ENCODE measurements at regions of chr17 and their contacts with region 1.

Region 1: DNA sequence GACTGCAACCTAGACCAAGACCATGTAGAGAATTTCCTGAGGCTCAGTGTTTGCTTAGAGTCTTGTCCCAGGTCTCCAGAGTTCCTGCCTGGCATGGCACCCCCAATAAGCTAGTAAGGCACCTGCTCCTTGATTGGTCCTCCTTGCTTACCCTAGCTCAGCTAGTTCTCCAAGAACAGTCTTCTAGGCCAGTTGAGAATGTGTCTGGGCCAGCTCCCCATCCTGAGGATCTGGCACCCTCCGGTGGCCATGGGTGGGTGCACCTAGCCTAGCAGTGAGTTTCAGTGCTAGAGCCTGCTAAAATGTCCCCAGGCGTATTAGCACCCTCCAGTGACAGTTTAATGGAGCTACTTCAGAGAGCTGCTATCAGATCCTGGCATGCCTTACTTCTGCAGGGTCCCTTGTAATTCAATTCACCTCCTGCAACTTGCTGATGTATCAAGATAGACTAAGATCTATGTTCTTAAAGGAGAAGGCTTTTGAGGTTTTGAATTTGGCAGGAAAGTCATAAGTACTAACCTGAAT is 44.4 kb upstream of the MED13 start:
- DNase-seq: peak; percentile 81
- H3K4me3 Mint-ChIP-seq: no peak overlapping the region
- H3K27ac Mint-ChIP-seq: no peak overlapping the region
- H3K4me1 Mint-ChIP-seq: no peaks in the 10 kb centered on the region
- H3K27me3 Mint-ChIP-seq: no peaks in the 10 kb centered on the region
- CTCF ChIP-seq: peak; percentile 67

Region 2: DNA sequence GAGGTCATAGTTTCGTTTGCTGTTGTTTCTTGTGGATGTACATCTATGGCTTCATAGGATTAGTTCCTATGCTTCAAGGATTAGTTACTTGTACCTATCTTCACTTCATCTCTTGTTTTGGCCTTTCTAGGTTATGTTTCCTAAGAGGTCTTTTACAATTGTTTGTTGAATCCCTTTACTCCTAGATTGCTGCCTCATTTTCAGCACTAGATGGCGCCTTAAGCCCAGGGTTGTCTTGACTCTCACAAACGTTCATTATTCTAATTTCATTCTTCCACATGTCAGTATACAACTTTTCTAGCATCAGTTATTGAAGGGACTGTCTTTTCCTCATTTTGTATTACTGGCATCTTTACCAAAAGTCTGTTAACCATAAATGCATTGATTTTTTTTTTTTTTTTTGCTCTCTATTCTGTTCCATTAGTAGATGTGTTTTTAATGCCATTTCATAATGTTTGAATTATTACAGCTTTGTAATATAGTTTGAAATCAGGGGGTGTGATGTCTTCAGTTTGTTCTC is 473.5 kb before region 1 on chr17:
- CTCF ChIA-PET with region 1: no interaction called
- intact Hi-C with region 1: loop called (anchors 1 kb)
- DNase-seq: peak; percentile 44
- H3K4me3 Mint-ChIP-seq: no peak overlapping the region
- H3K27ac Mint-ChIP-seq: no peak overlapping the region
- H3K4me1 Mint-ChIP-seq: no peaks in the 10 kb centered on the region
- H3K27me3 Mint-ChIP-seq: no peaks in the 10 kb centered on the region
- CTCF ChIP-seq: no peak

Region 3: DNA sequence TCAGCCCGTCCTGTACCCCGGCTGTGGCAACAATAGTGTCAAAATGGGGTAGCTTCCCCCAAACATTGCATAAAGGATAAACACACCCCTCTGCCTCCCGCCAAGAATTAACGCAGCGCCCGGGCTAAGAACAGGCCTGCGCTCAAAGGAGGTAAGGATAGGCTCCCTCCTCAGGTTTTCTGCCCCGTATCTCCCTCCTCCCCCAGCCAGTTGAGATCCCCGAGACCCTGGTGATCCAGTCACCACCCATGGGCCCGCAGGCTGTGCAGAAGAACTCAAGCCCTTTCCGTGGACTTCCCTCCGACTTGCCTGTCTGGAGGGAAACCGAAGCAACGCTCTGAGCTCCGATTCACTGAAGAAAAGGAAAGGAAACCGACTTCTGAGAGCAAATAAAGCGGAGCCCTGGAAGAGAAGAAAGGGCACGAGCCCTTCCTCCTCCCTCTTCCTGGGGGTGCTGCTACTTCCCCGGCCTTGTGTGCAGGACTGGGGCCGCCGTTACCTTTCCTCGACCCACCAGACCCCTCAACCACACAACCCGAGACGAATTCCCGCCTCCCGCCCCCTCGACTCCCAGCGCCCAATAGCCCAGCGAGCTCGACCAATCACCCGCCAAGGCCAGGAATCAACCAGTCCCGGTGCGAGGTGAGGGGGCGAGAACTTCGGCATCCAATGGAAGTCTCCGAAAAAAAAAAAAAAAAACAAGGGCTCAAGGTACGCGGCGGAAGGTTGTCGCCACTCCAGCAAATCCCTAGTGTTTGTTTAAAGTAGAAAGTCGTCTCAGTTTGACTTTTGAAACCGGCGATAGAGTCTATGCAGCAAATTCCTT is 246.3 kb before region 1 on chr17 and contains the start of gene BRIP1:
- CTCF ChIA-PET with region 1: interaction called, 25 read pairs
- intact Hi-C with region 1: no loop called
- DNase-seq: peak; percentile 88
- H3K4me3 Mint-ChIP-seq: peak within 1 kb of the TSS; percentile 83
- H3K27ac Mint-ChIP-seq: peak within 1 kb of the TSS; percentile 88
- H3K4me1 Mint-ChIP-seq: peaks cover 9% of the 10 kb centered on the region
- H3K27me3 Mint-ChIP-seq: no peaks in the 10 kb centered on the region
- CTCF ChIP-seq: no peak
- total RNA-seq, gene BRIP1: 10.3 and 12.3 TPM in 2 replicates

Region 4: DNA sequence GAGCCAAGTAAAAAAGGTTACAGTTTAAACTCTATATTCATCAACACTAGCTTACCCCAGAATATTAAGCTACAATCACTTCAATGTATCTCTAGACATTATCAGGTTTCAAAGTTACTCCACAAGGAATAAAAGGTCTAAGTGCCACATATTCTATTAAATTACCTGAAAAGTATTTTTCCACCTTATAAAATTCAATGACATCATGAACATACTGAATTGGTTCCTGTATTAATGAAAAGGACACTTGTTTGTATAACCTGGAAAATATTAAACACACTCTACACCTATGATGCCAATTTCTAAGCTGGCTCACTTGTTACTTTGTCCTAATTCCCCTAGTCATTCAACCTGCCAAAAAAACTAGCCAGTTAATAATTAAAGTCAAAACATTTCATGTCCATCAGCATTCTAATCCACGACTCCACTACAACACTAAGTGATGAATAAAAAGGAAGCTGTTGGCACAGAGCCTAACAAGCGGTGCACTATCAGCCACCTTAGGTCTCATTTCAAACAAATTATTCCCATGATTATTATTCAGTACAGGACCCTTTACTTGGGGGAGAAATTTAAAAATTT is 56.6 kb before region 1 on chr17:
- CTCF ChIA-PET with region 1: interaction called, 17 read pairs
- intact Hi-C with region 1: no loop called
- DNase-seq: peak; percentile 31
- H3K4me3 Mint-ChIP-seq: no peak overlapping the region
- H3K27ac Mint-ChIP-seq: peak overlapping the region; percentile 71
- H3K4me1 Mint-ChIP-seq: peaks cover 49% of the 10 kb centered on the region
- H3K27me3 Mint-ChIP-seq: no peaks in the 10 kb centered on the region
- CTCF ChIP-seq: no peak

Region 5: GRCh38 chr17:62065598-62066468 is 43.6 kb before region 1 on chr17:
- CTCF ChIA-PET with region 1: interaction called, 23 read pairs
- intact Hi-C with region 1: no loop called
- DNase-seq: peak; percentile 95
- H3K4me3 Mint-ChIP-seq: peak overlapping the region; percentile 95
- H3K27ac Mint-ChIP-seq: peak overlapping the region; percentile 90
- H3K4me1 Mint-ChIP-seq: peaks cover 33% of the 10 kb centered on the region
- H3K27me3 Mint-ChIP-seq: no peaks in the 10 kb centered on the region
- CTCF ChIP-seq: peak; percentile 37

Region 6: DNA sequence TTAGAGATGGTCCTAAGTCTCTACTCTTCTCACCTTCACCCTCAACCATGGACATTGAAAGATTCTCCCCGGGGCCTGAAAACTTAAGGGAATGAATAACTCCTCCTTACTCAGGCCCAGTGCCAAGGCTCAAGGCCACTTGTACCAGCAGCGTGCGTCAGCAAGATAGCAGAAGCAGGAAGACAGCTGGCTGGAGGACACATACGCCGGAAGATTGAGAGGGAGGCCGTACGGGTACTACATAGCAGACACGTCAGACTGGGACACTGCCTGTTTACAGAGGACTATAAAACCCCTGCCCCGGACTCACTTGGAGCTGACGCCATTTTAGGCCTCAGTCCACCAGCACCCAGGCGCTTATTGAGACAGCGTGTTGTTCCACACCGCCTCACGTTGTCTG is 31.4 kb after region 1 on chr17:
- CTCF ChIA-PET with region 1: no interaction called
- intact Hi-C with region 1: no loop called
- DNase-seq: no peak
- H3K4me3 Mint-ChIP-seq: peak overlapping the region; percentile 19
- H3K27ac Mint-ChIP-seq: no peak overlapping the region
- H3K4me1 Mint-ChIP-seq: peaks cover 10% of the 10 kb centered on the region
- H3K27me3 Mint-ChIP-seq: peaks cover 14% of the 10 kb centered on the region
- CTCF ChIP-seq: no peak

Region 7: DNA sequence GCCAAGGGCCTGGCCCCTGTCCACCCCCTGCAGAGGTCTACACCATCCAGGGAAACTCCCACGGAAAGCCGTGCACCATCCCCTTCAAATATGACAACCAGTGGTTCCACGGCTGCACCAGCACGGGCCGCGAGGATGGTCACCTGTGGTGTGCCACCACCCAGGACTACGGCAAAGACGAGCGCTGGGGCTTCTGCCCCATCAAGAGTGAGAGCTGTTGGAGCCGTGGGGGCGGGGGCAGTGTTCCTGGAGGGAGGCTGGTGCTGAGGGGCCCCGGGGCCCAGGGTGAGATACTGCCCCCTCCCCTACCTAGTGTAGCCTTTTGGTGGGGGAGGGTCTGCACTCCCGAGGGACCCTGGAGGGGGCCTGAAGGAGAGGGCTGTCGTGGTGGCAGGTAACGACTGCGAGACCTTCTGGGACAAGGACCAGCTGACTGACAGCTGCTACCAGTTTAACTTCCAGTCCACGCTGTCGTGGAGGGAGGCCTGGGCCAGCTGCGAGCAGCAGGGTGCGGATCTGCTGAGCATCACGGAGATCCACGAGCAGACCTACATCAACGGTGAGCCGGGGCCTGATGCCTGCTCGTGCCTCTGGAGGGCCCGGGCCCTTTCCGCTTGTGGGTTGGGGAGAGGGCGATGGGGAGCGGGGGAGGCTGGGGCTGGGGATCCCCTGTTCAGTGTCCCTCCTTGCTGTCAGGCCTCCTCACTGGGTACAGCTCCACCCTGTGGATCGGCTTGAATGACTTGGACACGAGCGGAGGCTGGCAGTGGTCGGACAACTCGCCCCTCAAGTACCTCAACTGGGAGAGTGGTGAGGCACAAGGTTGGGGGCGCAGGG is 556.8 kb after region 1 on chr17:
- CTCF ChIA-PET with region 1: no interaction called
- intact Hi-C with region 1: no loop called
- DNase-seq: no peak
- H3K4me3 Mint-ChIP-seq: no peak overlapping the region
- H3K27ac Mint-ChIP-seq: no peak overlapping the region
- H3K4me1 Mint-ChIP-seq: peaks cover 4% of the 10 kb centered on the region
- H3K27me3 Mint-ChIP-seq: peaks cover 27% of the 10 kb centered on the region
- CTCF ChIP-seq: no peak